HepG2 (cell line): ENCODE measurements at regions of chr16 and their contacts with region 1.

Region 1: GRCh38 chr16:47141773-47142485 is 1.8 kb downstream of the NETO2 start:
- DNase-seq: peak; percentile 90
- ATAC-seq: peak; percentile 79
- H3K4me3 ChIP-seq: peak overlapping the region; percentile 64 to 75 (median 67)
- H3K27ac ChIP-seq: no peak overlapping the region
- H3K4me1 ChIP-seq: peaks cover 21% of the 10 kb centered on the region
- H3K27me3 ChIP-seq: peaks cover 1 to 26% of the 10 kb centered on the region in 2 experiments; a peak in 3 of 5 replicates
- CTCF ChIP-seq: peak; percentile 98
- EP300 ChIP-seq: no peak
- POLR2A ChIP-seq: no peak
- RAD21 ChIP-seq: peak; percentile 90

Region 2: GRCh38 chr16:46711106-46712058 is 430.5 kb before region 1 on chr16:
- CTCF ChIA-PET with region 1: no interaction called
- POLR2A ChIA-PET with region 1: no interaction called
- in situ Hi-C with region 1: no loop called
- intact Hi-C with region 1: no loop called
- DNase-seq: no peak
- ATAC-seq: peak; percentile 91
- H3K4me3 ChIP-seq: peak overlapping the region; percentile 12 to 54 (median 40); a peak in 4 of 6 replicates
- H3K27ac ChIP-seq: no peak overlapping the region
- H3K4me1 ChIP-seq: peaks cover 16% of the 10 kb centered on the region
- H3K27me3 ChIP-seq: peaks cover 0 to 4% of the 10 kb centered on the region in 2 experiments; a peak in 1 of 5 replicates
- CTCF ChIP-seq: no peak
- EP300 ChIP-seq: no peak
- POLR2A ChIP-seq: no peak
- RAD21 ChIP-seq: no peak

Region 3: GRCh38 chr16:46947900-46948547 is 193.9 kb before region 1 on chr16:
- CTCF ChIA-PET with region 1: interaction called, 13 read pairs
- POLR2A ChIA-PET with region 1: interaction called, 3 read pairs
- in situ Hi-C with region 1: loop called (anchors 10 kb)
- intact Hi-C with region 1: loop called (anchors 1 kb)
- DNase-seq: peak; percentile 71
- ATAC-seq: peak; percentile 80
- H3K4me3 ChIP-seq: peak overlapping the region; percentile 1 to 47 (median 15); a peak in 5 of 6 replicates
- H3K27ac ChIP-seq: peak overlapping the region; percentile 56
- H3K4me1 ChIP-seq: peaks cover 42% of the 10 kb centered on the region
- H3K27me3 ChIP-seq: no peaks in the 10 kb centered on the region
- CTCF ChIP-seq: peak; percentile 85
- EP300 ChIP-seq: no peak
- POLR2A ChIP-seq: no peak
- RAD21 ChIP-seq: peak; percentile 91

Region 4: DNA sequence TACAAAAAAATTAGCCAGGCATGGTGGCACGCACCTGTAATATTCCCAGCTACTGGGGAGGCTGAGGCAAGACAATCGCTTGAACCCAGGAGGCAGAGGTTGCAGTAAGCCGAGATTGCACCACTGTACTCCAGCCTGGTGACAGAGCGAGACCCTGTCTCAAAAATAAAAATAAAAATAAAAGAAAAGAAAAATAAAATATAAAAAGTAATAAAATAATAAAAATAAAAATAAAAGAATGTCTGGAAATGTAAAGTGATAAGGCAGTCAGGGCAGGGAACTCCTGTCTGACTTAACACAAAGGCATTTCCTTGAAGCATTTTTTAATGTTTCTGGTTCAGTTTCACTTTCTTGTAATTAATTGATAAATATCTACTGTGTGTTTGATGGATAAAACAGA is 133.8 kb before region 1 on chr16:
- CTCF ChIA-PET with region 1: no interaction called
- POLR2A ChIA-PET with region 1: no interaction called
- in situ Hi-C with region 1: no loop called
- intact Hi-C with region 1: no loop called
- DNase-seq: no peak
- ATAC-seq: no peak
- H3K4me3 ChIP-seq: no peak overlapping the region
- H3K27ac ChIP-seq: no peak overlapping the region
- H3K4me1 ChIP-seq: no peaks in the 10 kb centered on the region
- H3K27me3 ChIP-seq: peaks cover 0 to 7% of the 10 kb centered on the region in 2 experiments; a peak in 2 of 5 replicates
- CTCF ChIP-seq: no peak
- EP300 ChIP-seq: no peak
- POLR2A ChIP-seq: no peak
- RAD21 ChIP-seq: no peak

Region 5: GRCh38 chr16:47049901-47050583 is 91.9 kb before region 1 on chr16:
- CTCF ChIA-PET with region 1: no interaction called
- POLR2A ChIA-PET with region 1: no interaction called
- in situ Hi-C with region 1: no loop called
- intact Hi-C with region 1: loop called (anchors 5 kb)
- DNase-seq: no peak
- ATAC-seq: 0 out of 3 replicates have a peak, but pooled peaks have one; percentile 9
- H3K4me3 ChIP-seq: no peak overlapping the region
- H3K27ac ChIP-seq: no peak overlapping the region
- H3K4me1 ChIP-seq: peaks cover 53% of the 10 kb centered on the region
- H3K27me3 ChIP-seq: peaks cover 12 to 48% of the 10 kb centered on the region in 2 experiments
- CTCF ChIP-seq: peak; percentile 70
- EP300 ChIP-seq: no peak
- POLR2A ChIP-seq: no peak
- RAD21 ChIP-seq: no peak

Region 6: DNA sequence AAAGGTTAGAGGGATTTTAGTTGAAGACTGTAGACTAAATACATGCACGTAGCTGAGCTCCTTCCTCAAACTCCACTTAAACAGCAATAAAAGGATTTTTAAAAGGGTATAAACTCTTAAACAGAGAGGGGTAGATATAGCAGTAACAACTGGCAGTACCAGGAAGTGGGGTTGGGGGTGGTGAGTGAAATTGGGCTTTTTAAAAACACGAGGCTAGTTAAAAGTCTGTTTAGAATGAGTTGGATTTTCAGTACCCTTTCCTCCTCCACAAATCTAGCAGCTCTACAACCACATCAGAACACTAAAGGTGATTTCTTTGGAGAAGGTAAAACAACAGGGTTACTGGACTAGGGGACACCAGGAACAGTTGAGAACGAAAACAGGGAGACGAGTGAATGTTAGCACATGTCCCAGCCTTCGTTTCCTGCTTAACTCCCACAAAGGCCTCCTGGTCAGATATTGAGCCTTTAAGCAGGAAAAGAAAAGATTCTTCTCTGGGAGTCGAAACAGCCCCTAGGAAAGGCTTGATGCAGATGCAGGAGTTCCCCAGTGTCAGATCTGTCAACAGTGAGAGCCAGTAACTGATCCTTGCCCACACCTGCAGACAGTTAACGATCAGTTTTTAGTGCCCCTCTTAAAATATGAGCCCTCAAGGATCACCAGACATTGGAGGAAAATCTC is 12.0 kb before region 1 on chr16:
- CTCF ChIA-PET with region 1: no interaction called
- POLR2A ChIA-PET with region 1: no interaction called
- in situ Hi-C with region 1: no loop called
- intact Hi-C with region 1: no loop called
- DNase-seq: no peak
- ATAC-seq: no peak
- H3K4me3 ChIP-seq: no peak overlapping the region
- H3K27ac ChIP-seq: no peak overlapping the region
- H3K4me1 ChIP-seq: peaks cover 6% of the 10 kb centered on the region; the same call in 1 of the 2 replicates
- H3K27me3 ChIP-seq: no peaks in the 10 kb centered on the region
- CTCF ChIP-seq: no peak
- EP300 ChIP-seq: no peak
- POLR2A ChIP-seq: no peak
- RAD21 ChIP-seq: no peak

Region 7: DNA sequence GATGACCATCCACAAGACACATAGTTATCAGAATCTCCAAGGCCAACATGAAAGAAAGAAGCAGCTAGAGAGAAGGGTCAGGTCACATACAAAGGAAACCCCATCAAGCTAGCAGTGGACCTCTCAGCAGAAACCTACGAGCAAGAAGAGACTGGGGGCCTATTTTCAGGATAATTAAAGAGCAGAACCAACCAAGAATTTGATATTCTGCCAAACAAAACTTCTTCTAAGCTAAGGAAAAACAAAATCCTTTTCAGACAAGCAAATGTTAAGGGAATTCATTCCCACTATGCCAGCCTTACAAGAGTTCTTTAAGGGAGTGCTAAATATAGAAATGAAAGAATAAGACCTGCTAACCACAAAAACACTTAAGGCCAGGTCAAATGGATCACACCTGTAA is 271.1 kb after region 1 on chr16:
- CTCF ChIA-PET with region 1: no interaction called
- POLR2A ChIA-PET with region 1: no interaction called
- in situ Hi-C with region 1: no loop called
- intact Hi-C with region 1: no loop called
- DNase-seq: no peak
- ATAC-seq: no peak
- H3K4me3 ChIP-seq: no peak overlapping the region
- H3K27ac ChIP-seq: no peak overlapping the region
- H3K4me1 ChIP-seq: no peaks in the 10 kb centered on the region
- H3K27me3 ChIP-seq: no peaks in the 10 kb centered on the region
- CTCF ChIP-seq: no peak
- EP300 ChIP-seq: no peak
- POLR2A ChIP-seq: no peak
- RAD21 ChIP-seq: no peak

Region 8: DNA sequence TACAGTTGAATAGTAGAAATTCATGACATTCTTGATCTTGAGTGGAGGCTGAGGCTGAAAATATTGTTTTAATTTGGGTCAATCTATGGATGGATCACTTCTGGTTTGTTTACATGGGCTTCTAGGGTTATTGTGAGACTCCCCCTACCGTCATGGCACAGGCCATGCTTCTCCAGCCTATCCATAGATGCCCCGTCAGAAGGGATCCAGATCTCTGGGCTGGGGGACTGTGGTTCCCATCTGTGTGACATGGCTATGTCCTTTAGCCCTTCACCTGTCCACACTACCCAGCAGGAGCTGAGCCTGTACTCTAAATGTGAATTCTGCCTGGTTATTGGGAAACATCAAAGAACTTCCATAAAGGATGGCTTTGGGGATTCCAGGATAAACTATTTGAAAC is 853.4 kb after region 1 on chr16:
- CTCF ChIA-PET with region 1: interaction called, 4 read pairs
- POLR2A ChIA-PET with region 1: no interaction called
- in situ Hi-C with region 1: no loop called
- intact Hi-C with region 1: loop called (anchors 1 kb)
- DNase-seq: no peak
- ATAC-seq: peak; percentile 67
- H3K4me3 ChIP-seq: no peak overlapping the region
- H3K27ac ChIP-seq: no peak overlapping the region
- H3K4me1 ChIP-seq: no peaks in the 10 kb centered on the region
- H3K27me3 ChIP-seq: no peaks in the 10 kb centered on the region; a peak in 1 of 5 replicates
- CTCF ChIP-seq: peak; percentile 40
- EP300 ChIP-seq: no peak
- POLR2A ChIP-seq: no peak
- RAD21 ChIP-seq: no peak

Region 9: GRCh38 chr16:48054881-48055601 is 913.1 kb after region 1 on chr16:
- CTCF ChIA-PET with region 1: interaction called, 9 read pairs
- POLR2A ChIA-PET with region 1: no interaction called
- in situ Hi-C with region 1: loop called (anchors 10 kb)
- intact Hi-C with region 1: loop called (anchors 2 kb)
- DNase-seq: peak; percentile 35
- ATAC-seq: peak; percentile 95
- H3K4me3 ChIP-seq: no peak overlapping the region
- H3K27ac ChIP-seq: no peak overlapping the region
- H3K4me1 ChIP-seq: 0 out of 2 replicates have a peak, but pooled peaks cover 8% of the 10 kb centered on the region
- H3K27me3 ChIP-seq: peaks cover 0 to 23% of the 10 kb centered on the region in 2 experiments; a peak in 4 of 5 replicates
- CTCF ChIP-seq: peak; percentile 90
- EP300 ChIP-seq: no peak
- POLR2A ChIP-seq: no peak
- RAD21 ChIP-seq: peak; percentile 53; the same call in 1 of the 2 replicates

Region 10: DNA sequence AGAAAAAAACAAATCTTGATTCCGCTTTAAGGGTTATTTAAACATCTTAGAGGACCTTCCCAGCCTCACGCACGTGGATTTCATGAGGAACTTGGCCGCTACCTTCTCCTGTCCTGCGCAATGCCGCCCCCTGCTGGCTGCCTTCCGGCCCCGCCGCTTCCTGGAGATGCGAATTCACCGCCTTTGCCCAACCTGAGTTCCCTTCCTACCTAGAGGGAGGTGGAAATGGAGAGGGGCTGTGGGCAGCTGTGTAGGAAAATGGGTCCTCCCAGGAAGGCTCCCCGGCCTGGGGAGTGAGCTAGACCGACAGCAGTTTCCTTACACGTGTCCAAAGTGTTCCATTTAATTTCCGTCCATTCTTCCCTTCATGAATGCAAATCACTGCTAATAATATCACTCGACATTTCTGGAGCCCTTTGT is 1014.9 kb after region 1 on chr16:
- CTCF ChIA-PET with region 1: interaction called, 13 read pairs
- POLR2A ChIA-PET with region 1: no interaction called
- in situ Hi-C with region 1: loop called (anchors 5 kb)
- intact Hi-C with region 1: loop called (anchors 2 kb)
- DNase-seq: peak; percentile 52
- ATAC-seq: peak; percentile 88
- H3K4me3 ChIP-seq: peak overlapping the region in 1 of 3 experiments; percentile 31; a peak in 1 of 6 replicates
- H3K27ac ChIP-seq: no peak overlapping the region
- H3K4me1 ChIP-seq: peaks cover 8% of the 10 kb centered on the region
- H3K27me3 ChIP-seq: peaks cover 4 to 59% of the 10 kb centered on the region in 2 experiments; a peak in 4 of 5 replicates
- CTCF ChIP-seq: peak; percentile 97
- EP300 ChIP-seq: no peak
- POLR2A ChIP-seq: no peak
- RAD21 ChIP-seq: peak; percentile 77